Activated T-helper 1 cell treated with anti-CD3 and anti-CD28 coated beads, Interleukin-12 subunit alpha, Interleukin-12 subunit beta, Interleukin-2, Interleukin-4 antibody, amounts not matched to agents 30 ng/mL and 10 ng/mL and 1 ng/mL, durations not matched to agents 14 hours and 24 hours and 36 hours (primary cell): ENCODE measurements at regions of chr22 and their contacts with region 1.

Region 1: GRCh38 chr22:37199103-37199759 is 11.2 kb upstream of the C1QTNF6 start:
- DNase-seq: peak; percentile 99
- H3K4me3 Mint-ChIP-seq: peak overlapping the region; percentile 83
- H3K27ac Mint-ChIP-seq: peak overlapping the region; percentile 87
- H3K4me1 Mint-ChIP-seq: peaks cover 38% of the 10 kb centered on the region
- H3K27me3 Mint-ChIP-seq: no peaks in the 10 kb centered on the region

Region 2: GRCh38 chr22:36775964-36776669 is 423.1 kb before region 1 on chr22 and contains the start of gene IFT27:
- intact Hi-C with region 1: loop called (anchors 1 kb)
- DNase-seq: peak; percentile 97
- H3K4me3 Mint-ChIP-seq: peak within 1 kb of the TSS; percentile 92
- H3K27ac Mint-ChIP-seq: peak within 1 kb of the TSS; percentile 94
- H3K4me1 Mint-ChIP-seq: peaks cover 36% of the 10 kb centered on the region
- H3K27me3 Mint-ChIP-seq: no peaks in the 10 kb centered on the region
- total RNA-seq, gene IFT27: 26.0 and 30.9 TPM in 2 replicates

Region 3: DNA sequence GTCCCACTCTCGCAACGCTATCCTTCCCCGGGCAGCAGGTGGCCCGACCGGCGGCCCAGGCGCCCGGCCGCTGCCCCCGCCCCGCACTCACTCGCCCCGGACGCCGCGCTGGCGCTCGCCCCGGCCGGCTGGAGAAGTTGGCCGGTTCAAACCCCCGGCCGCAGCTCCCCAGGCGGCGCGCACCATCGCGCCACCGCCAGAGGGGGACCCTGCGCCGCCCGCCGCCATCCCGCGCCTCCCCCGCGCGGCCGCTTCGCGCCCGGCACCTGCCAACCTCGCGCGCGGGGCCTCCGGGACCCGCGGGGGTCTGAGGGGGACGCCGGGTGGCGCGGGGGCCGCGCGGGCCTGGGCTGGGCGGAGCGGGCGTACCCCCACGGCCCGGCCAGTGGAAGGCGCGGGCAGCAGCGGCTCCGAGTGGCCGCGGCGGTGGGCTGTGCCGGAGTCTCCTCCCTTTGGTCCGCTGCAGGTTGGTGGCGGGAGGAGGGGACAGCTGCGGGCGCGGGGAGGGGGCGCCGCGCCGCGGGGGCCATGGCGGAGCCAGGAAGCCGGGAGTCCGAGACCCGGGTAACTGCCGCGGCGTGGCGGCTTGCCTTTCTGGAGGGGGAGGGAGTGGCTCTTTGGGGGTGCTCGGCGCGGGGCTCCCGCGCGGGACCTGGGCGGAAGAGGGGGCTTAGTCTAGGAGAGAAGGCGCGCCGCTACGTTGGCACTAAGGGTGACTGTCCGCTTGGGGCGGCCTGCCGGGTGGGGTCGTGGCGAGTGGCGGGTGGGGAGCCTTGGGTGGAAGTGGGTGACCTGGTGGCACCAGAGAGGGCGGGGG is 179.7 kb before region 1 on chr22 and contains the starts of genes MPST and TST:
- intact Hi-C with region 1: loop called (anchors 1 kb)
- DNase-seq: peak; percentile 53
- H3K4me3 Mint-ChIP-seq: peak within 1 kb of the TSS; percentile 90
- H3K27ac Mint-ChIP-seq: peak within 1 kb of the TSS; percentile 74
- H3K4me1 Mint-ChIP-seq: peaks cover 16% of the 10 kb centered on the region
- H3K27me3 Mint-ChIP-seq: no peaks in the 10 kb centered on the region
- total RNA-seq, gene MPST: 18.0 and 20.1 TPM in 2 replicates
- total RNA-seq, gene TST: 6.9 and 8.2 TPM in 2 replicates

Region 4: GRCh38 chr22:37121887-37122591 is 77.2 kb before region 1 on chr22:
- intact Hi-C with region 1: loop called (anchors 1 kb)
- DNase-seq: peak; percentile 93
- H3K4me3 Mint-ChIP-seq: peak overlapping the region; percentile 86
- H3K27ac Mint-ChIP-seq: peak overlapping the region; percentile 100
- H3K4me1 Mint-ChIP-seq: peaks cover 85% of the 10 kb centered on the region
- H3K27me3 Mint-ChIP-seq: peaks cover 2% of the 10 kb centered on the region

Region 5: DNA sequence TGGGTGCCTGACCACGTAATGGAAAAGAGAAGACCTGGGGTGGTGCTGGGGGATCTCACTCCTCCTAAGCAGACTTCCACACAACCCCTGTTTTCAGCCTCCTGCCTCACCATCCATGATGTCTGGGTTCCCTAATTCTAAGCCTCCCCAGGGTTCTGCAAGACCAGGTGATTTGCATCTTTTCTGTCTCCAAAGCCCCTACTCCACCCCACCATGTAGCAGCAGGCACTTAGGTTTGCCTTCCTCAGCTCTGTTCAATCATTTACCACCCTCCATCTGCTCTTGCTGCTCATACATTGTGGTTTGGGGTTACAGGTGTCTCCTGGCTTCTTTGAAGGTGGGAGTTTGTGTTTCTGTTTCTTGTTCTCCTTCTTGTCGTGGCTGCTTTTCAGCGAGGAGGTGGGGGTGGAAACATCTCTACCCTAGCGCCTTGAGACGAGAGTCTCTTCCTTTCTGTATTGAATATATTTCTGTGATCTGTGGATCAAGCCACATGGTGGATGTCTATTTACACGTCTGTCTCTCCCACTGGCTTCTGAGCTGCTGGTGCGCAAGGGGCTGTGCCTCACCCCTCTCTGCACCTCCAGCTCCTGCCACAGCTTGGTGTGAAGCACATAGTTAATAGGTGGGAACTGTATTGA is 19.7 kb after region 1 on chr22:
- intact Hi-C with region 1: loop called (anchors 1 kb)
- DNase-seq: peak; percentile 72
- H3K4me3 Mint-ChIP-seq: peak overlapping the region; percentile 79
- H3K27ac Mint-ChIP-seq: peak overlapping the region; percentile 96
- H3K4me1 Mint-ChIP-seq: peaks cover 68% of the 10 kb centered on the region
- H3K27me3 Mint-ChIP-seq: no peaks in the 10 kb centered on the region

Region 6: GRCh38 chr22:37260901-37261336 is 61.7 kb after region 1 on chr22:
- intact Hi-C with region 1: loop called (anchors 2 kb)
- DNase-seq: peak; percentile 55
- H3K4me3 Mint-ChIP-seq: no peak overlapping the region
- H3K27ac Mint-ChIP-seq: no peak overlapping the region
- H3K4me1 Mint-ChIP-seq: peaks cover 26% of the 10 kb centered on the region
- H3K27me3 Mint-ChIP-seq: peaks cover 8% of the 10 kb centered on the region